MCF 10A (cell line): ENCODE measurements at regions of chr6 and their contacts with region 1.

Region 1: GRCh38 chr6:33672808-33673207 is 38.7 kb downstream of the UQCC2 start:
- DNase-seq: peak; percentile 96
- H3K4me3 Mint-ChIP-seq: no peak overlapping the region
- H3K27ac Mint-ChIP-seq: peak overlapping the region; percentile 83
- H3K4me1 Mint-ChIP-seq: peaks cover 10% of the 10 kb centered on the region
- H3K27me3 Mint-ChIP-seq: no peaks in the 10 kb centered on the region
- CTCF ChIP-seq: peak; percentile 57

Region 2: GRCh38 chr6:33579828-33580714 is 92.7 kb before region 1 on chr6 and contains the start of gene BAK1:
- CTCF ChIA-PET with region 1: interaction called, 22 read pairs
- POLR2A ChIA-PET with region 1: interaction called, 10 read pairs
- intact Hi-C with region 1: no loop called
- DNase-seq: peak; percentile 90
- H3K4me3 Mint-ChIP-seq: peak within 1 kb of the TSS; percentile 85
- H3K27ac Mint-ChIP-seq: peak within 1 kb of the TSS; percentile 97
- H3K4me1 Mint-ChIP-seq: peaks cover 28% of the 10 kb centered on the region
- H3K27me3 Mint-ChIP-seq: no peaks in the 10 kb centered on the region
- CTCF ChIP-seq: peak; percentile 42
- total RNA-seq, gene BAK1: 45.8 and 57.7 TPM in 2 replicates

Region 3: GRCh38 chr6:33613795-33614168 is 59.0 kb before region 1 on chr6:
- CTCF ChIA-PET with region 1: interaction called, 10 read pairs
- POLR2A ChIA-PET with region 1: no interaction called
- intact Hi-C with region 1: no loop called
- DNase-seq: peak; percentile 47
- H3K4me3 Mint-ChIP-seq: no peak overlapping the region
- H3K27ac Mint-ChIP-seq: peak overlapping the region; percentile 2
- H3K4me1 Mint-ChIP-seq: peaks cover 34% of the 10 kb centered on the region
- H3K27me3 Mint-ChIP-seq: no peaks in the 10 kb centered on the region
- CTCF ChIP-seq: no peak

Region 4: DNA sequence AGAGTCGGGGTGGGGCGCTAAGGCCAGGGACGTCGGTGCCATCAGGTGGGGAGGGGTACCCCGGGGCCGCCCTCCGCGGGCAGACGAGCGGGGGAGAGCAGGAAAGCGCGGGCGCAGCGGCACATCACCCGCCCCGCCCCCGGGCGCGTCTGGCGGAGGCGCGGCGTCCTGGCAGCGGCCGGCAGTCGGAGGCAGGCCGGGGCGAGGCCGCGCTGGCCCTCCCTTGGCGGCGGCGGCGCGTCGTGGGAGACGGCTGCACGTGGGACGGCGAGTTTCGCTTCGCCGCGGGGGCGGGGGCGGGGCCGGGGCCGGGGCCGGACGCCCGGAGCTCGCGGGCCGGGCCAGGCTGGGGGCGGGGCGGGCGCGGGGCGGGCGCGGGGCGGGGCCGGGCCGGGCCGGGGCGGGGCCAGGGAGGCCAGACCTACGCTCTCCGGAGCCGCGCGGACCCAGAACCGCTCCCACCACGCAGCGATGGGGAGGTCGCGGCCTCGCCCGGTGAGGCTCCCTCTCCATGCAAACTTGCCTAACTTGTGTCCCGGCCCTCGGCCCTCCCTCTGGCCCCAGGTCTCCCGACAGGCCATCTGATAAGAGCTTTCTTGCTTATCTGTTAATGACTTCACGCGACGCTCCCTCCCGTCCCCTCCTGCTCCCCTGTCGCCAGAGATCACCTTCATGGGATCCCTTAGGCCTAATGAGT is 39.2 kb before region 1 on chr6:
- CTCF ChIA-PET with region 1: interaction called, 10 read pairs
- POLR2A ChIA-PET with region 1: interaction called, 3 read pairs
- intact Hi-C with region 1: no loop called
- DNase-seq: peak; percentile 73
- H3K4me3 Mint-ChIP-seq: peak overlapping the region; percentile 72
- H3K27ac Mint-ChIP-seq: no peak overlapping the region
- H3K4me1 Mint-ChIP-seq: peaks cover 50% of the 10 kb centered on the region
- H3K27me3 Mint-ChIP-seq: no peaks in the 10 kb centered on the region
- CTCF ChIP-seq: no peak

Region 5: DNA sequence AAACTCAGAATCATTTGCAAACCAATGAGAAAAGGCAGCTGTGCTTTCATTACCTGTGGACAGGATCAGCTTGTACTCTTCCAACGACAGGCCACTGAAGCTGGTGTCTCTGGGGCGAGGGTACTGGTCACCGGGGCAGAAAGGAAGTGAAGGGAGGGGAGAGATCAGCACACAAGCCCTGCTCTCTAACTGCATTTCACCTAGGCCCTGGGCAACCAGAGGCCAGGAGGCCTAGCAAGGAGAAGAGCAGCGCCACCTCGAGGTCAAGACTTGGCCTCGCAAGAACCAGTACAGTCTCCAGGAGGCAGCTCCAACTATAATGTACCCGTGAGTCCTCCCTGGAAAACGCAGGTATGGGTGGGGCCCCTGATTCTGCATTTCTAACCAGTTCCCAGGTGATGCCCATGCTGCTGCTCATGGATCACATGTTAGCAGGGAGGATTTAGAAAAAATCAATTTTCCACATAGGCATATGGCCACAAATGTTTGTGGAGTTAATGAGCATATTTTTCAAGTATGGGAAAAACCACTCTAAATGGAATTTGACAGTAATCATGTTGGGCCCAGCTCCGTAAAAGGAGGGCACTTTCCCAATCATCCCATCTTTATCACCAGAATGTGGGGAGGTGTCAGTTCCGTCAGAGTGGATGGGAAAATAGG is 27.7 kb after region 1 on chr6:
- CTCF ChIA-PET with region 1: interaction called, 10 read pairs
- POLR2A ChIA-PET with region 1: interaction called, 3 read pairs
- intact Hi-C with region 1: loop called (anchors 2 kb)
- DNase-seq: peak; percentile 85
- H3K4me3 Mint-ChIP-seq: no peak overlapping the region
- H3K27ac Mint-ChIP-seq: no peak overlapping the region
- H3K4me1 Mint-ChIP-seq: peaks cover 19% of the 10 kb centered on the region
- H3K27me3 Mint-ChIP-seq: no peaks in the 10 kb centered on the region
- CTCF ChIP-seq: peak; percentile 69